ENCODE measurements at regions of chr15 and their contacts with region 1.

Region 1: DNA sequence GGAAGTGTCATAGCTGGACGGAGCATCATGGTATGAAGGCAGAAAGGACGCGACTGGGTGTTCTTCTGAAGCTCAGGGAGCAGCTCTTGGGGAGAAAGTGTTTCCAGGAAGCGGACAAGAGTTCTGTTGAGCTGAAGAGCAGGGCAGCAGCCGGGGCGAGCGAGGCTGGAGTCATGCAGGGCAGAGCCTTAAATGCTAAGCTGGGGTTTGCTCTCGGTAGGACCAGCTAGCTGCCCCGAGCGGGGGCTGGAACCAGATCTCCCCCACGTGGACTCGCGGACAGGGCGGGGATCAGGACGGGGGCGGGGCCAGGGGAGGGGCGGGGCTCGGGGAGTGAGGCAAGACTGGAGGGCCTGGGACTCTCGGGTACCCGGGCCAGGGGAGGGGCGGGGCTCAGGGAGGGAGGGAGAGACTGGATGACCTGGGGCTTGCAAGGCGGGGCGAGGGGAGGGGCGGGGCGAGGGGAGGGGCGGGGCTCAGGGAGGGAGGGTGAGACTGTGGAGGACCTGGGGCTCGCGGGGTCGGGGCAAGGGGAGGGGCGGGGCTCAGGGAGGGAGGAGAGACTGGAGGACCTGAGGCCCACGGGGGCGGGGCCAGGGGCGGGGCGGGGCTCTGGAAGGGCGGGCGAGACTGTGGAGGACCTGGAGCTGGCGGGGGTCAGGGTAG is 486 bp upstream of the FAH start:
- DNase-seq: peak; percentile 94
- H3K4me3 Mint-ChIP-seq: peak overlapping the region; percentile 87
- H3K27ac Mint-ChIP-seq: no peak overlapping the region
- H3K4me1 Mint-ChIP-seq: no peaks in the 10 kb centered on the region
- H3K27me3 Mint-ChIP-seq: no peaks in the 10 kb centered on the region
- CTCF ChIP-seq: no peak

Region 2: GRCh38 chr15:79896637-79897379 is 255.5 kb before region 1 on chr15 and contains the start of gene MTHFS:
- CTCF ChIA-PET with region 1: no interaction called
- POLR2A ChIA-PET with region 1: interaction called, 5 read pairs
- intact Hi-C with region 1: loop called (anchors 5 kb)
- DNase-seq: peak; percentile 75
- H3K4me3 Mint-ChIP-seq: peak within 1 kb of the TSS; percentile 84
- H3K27ac Mint-ChIP-seq: peak within 1 kb of the TSS; percentile 85
- H3K4me1 Mint-ChIP-seq: peaks cover 38% of the 10 kb centered on the region
- H3K27me3 Mint-ChIP-seq: no peaks in the 10 kb centered on the region
- CTCF ChIP-seq: peak; percentile 45
- total RNA-seq, gene MTHFS: 28.5 and 34.5 TPM in 2 replicates

Region 3: GRCh38 chr15:80072285-80072994 is 79.9 kb before region 1 on chr15:
- CTCF ChIA-PET with region 1: no interaction called
- POLR2A ChIA-PET with region 1: interaction called, 16 read pairs
- intact Hi-C with region 1: no loop called
- DNase-seq: peak; percentile 89
- H3K4me3 Mint-ChIP-seq: peak overlapping the region; percentile 82
- H3K27ac Mint-ChIP-seq: peak overlapping the region; percentile 76
- H3K4me1 Mint-ChIP-seq: peaks cover 21% of the 10 kb centered on the region
- H3K27me3 Mint-ChIP-seq: no peaks in the 10 kb centered on the region
- CTCF ChIP-seq: no peak

Region 4: GRCh38 chr15:80173022-80173759 is 20.9 kb after region 1 on chr15:
- CTCF ChIA-PET with region 1: interaction called, 5 read pairs
- POLR2A ChIA-PET with region 1: interaction called, 14 read pairs
- intact Hi-C with region 1: no loop called
- DNase-seq: peak; percentile 97
- H3K4me3 Mint-ChIP-seq: no peak overlapping the region
- H3K27ac Mint-ChIP-seq: no peak overlapping the region
- H3K4me1 Mint-ChIP-seq: peaks cover 46% of the 10 kb centered on the region
- H3K27me3 Mint-ChIP-seq: no peaks in the 10 kb centered on the region
- CTCF ChIP-seq: peak; percentile 87

Region 5: GRCh38 chr15:80191897-80192595 is 39.7 kb after region 1 on chr15:
- CTCF ChIA-PET with region 1: no interaction called
- POLR2A ChIA-PET with region 1: no interaction called
- intact Hi-C with region 1: no loop called
- DNase-seq: no peak
- H3K4me3 Mint-ChIP-seq: no peak overlapping the region
- H3K27ac Mint-ChIP-seq: no peak overlapping the region
- H3K4me1 Mint-ChIP-seq: no peaks in the 10 kb centered on the region
- H3K27me3 Mint-ChIP-seq: no peaks in the 10 kb centered on the region
- CTCF ChIP-seq: no peak

Region 6: DNA sequence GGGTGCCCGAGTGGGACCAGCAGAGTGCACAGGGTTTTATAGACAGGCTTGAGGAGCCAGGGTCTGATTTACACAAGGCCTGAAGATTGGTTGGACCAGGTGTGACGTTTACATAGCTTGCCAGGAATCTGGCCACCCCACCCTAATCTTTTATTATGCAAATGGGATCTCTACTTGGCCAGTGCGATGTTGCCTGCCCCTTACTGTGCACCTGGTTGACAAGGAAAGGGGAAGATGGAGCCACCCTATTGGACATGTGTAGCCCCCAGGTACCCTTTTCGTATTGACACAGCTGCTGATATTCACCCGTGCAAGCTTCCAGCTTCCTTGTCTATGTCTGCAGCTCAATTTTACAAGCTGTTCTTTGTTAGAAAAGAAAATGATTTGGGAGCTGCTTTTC is 383.9 kb after region 1 on chr15:
- CTCF ChIA-PET with region 1: no interaction called
- POLR2A ChIA-PET with region 1: no interaction called
- intact Hi-C with region 1: no loop called
- DNase-seq: no peak
- H3K4me3 Mint-ChIP-seq: no peak overlapping the region
- H3K27ac Mint-ChIP-seq: no peak overlapping the region
- H3K4me1 Mint-ChIP-seq: no peaks in the 10 kb centered on the region
- H3K27me3 Mint-ChIP-seq: peaks cover 13% of the 10 kb centered on the region
- CTCF ChIP-seq: no peak

Region 7: DNA sequence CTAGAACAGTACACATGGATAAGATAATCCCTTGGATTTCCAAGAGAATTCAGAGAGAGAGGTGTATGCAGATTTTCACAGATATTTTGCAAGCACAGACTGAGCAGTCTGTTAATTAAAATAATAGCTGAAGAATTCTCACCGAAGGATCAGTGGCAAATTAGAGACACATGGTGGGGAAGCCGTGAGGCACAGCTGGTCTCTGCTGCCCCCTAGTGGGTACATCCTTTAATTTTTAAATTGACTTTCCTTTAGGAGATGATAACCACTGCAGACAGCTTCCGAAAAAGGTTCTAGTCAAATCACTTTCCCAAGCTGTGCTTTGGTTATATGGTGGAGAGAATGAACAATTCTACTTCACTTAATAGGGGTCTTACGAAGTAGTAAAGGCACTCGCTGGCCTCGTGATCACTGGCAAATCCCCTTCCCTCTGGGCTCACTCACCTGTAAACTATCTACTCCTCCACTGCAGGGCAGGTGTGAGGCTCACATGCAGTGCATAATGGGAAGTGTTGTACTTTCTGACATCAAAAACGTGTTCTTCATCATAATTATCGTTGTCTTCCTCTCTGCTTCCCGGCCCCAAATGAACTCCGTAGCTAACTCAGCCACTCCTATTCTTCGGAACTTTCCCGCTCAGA is 817.8 kb after region 1 on chr15:
- CTCF ChIA-PET with region 1: no interaction called
- POLR2A ChIA-PET with region 1: no interaction called
- intact Hi-C with region 1: no loop called
- DNase-seq: peak; percentile 71
- H3K4me3 Mint-ChIP-seq: no peak overlapping the region
- H3K27ac Mint-ChIP-seq: no peak overlapping the region
- H3K4me1 Mint-ChIP-seq: no peaks in the 10 kb centered on the region
- H3K27me3 Mint-ChIP-seq: no peaks in the 10 kb centered on the region
- CTCF ChIP-seq: peak; percentile 79